Heart left ventricle (tissue), 16 donors: ENCODE measurements at regions of chr6 and their contacts with region 1.

Region 1: GRCh38 chr6:125082908-125083683 is 70.5 kb upstream of the TPD52L1 start:
- DNase-seq: no peak
- ATAC-seq: no peak
- H3K4me3 ChIP-seq: no peak overlapping the region
- H3K27ac ChIP-seq: no peak overlapping the region
- H3K4me1 ChIP-seq: peaks cover 0 to 6% (median 0%) of the 10 kb centered on the region in 12 donors
- H3K27me3 ChIP-seq: no peaks in the 10 kb centered on the region
- CTCF ChIP-seq: no peak
- POLR2A ChIP-seq: no peak

Region 2: DNA sequence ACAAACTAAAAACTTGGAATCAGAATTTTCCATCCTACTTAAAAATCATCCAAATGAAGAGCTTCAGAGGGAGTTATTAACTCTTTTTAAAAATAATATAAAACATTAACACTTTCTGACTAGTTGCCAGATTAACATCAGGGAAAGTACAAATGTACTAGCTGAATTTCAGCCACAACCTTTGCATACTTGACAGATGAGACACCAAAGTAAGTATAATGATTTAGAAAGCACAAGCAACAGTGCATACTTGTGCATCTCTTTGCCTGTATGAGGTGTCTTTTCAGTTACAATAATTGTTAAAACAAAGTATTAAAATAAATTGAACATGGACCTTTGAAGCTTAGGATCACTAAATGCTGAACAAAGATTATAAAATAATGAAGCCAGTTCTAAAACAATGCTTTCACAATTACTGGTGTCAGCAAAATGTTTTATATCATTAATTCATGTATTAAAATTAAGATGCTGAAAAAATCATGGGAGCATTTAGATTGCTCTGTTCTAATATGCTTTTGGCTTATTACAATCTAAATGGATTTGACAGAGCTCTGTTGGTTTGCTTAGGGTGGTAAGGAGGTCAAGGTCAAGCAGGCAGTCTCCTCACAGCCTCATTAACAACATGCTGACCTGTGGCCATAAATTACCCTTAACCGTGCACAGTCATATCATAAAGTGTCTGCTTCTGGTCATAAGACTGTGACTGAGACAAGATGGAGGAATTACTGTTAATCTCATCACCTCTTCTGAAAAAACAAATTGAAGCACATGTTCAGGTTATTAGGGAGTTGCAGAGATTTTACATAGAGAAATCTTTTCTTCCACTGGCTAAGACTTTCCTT is 105.8 kb before region 1 on chr6:
- intact Hi-C with region 1: loop called in 1 of 10 experiments (anchors 10 kb)
- DNase-seq: no peak
- ATAC-seq: no peak
- H3K4me3 ChIP-seq: no peak overlapping the region
- H3K27ac ChIP-seq: no peak overlapping the region
- H3K4me1 ChIP-seq: no peaks in the 10 kb centered on the region
- H3K27me3 ChIP-seq: no peaks in the 10 kb centered on the region
- CTCF ChIP-seq: no peak
- POLR2A ChIP-seq: no peak

Region 3: GRCh38 chr6:125095580-125096301 is 12.6 kb after region 1 on chr6:
- intact Hi-C with region 1: no loop called
- DNase-seq: no peak
- ATAC-seq: no peak
- H3K4me3 ChIP-seq: no peak overlapping the region
- H3K27ac ChIP-seq: peak overlapping the region in 1 of 12 donors; percentile 32
- H3K4me1 ChIP-seq: peaks cover 0 to 24% (median 0%) of the 10 kb centered on the region in 12 donors
- H3K27me3 ChIP-seq: no peaks in the 10 kb centered on the region
- CTCF ChIP-seq: no peak
- POLR2A ChIP-seq: no peak